ENCODE measurements at regions of chr2 and their contacts with region 1.

Region 1: GRCh38 chr2:216554755-216555154 is 56.1 kb downstream of the RPL37A start:
- DNase-seq: peak in 1 of 2 donors; percentile 90
- H3K4me3 ChIP-seq: no peak overlapping the region
- H3K27ac ChIP-seq: peak overlapping the region; percentile 86 to 90
- H3K4me1 ChIP-seq: no peaks in the 10 kb centered on the region
- H3K27me3 ChIP-seq: no peaks in the 10 kb centered on the region
- CTCF ChIP-seq: no peak
- POLR2A ChIP-seq: no peak

Region 2: GRCh38 chr2:216565956-216566355 is 11.2 kb after region 1 on chr2:
- intact Hi-C with region 1: loop called (anchors 1 kb)
- DNase-seq: no peak
- H3K4me3 ChIP-seq: no peak overlapping the region
- H3K27ac ChIP-seq: peak overlapping the region in 1 of 2 donors; percentile 50
- H3K4me1 ChIP-seq: no peaks in the 10 kb centered on the region
- H3K27me3 ChIP-seq: no peaks in the 10 kb centered on the region
- CTCF ChIP-seq: no peak
- POLR2A ChIP-seq: no peak